H1 (cell line): ENCODE measurements at regions of chr11 and their contacts with region 1.

Region 1: GRCh38 chr11:17544181-17544622 is at the start of gene USH1C:
- DNase-seq: peak in 1 of 2 experiments; percentile 95
- H3K4me3 ChIP-seq: peak within 1 kb of the TSS; percentile 50 to 77 (median 62)
- H3K27ac ChIP-seq: no peak within 1 kb of the TSS
- H3K4me1 ChIP-seq: peaks cover 6 to 20% (median 9%) of the 10 kb centered on the region in 4 experiments
- H3K27me3 ChIP-seq: peaks cover 0 to 24% (median 8%) of the 10 kb centered on the region in 4 experiments; a peak in 4 of 7 replicates
- CTCF ChIP-seq: no peak
- EP300 ChIP-seq: no peak
- POLR2A ChIP-seq: no peak; a peak in 1 of 3 replicates
- RAD21 ChIP-seq: no peak
- total RNA-seq, gene USH1C: 1.3 and 2.4 TPM in 2 replicates

Region 2: GRCh38 chr11:17389211-17389956 is 154.8 kb before region 1 on chr11:
- CTCF ChIA-PET with region 1: interaction called, 22 read pairs
- POLR2A ChIA-PET with region 1: no interaction called
- DNase-seq: peak; percentile 53 to 92
- H3K4me3 ChIP-seq: peak overlapping the region; percentile 51 to 80 (median 60)
- H3K27ac ChIP-seq: no peak overlapping the region
- H3K4me1 ChIP-seq: peaks cover 0 to 9% (median 2%) of the 10 kb centered on the region in 4 experiments; a peak in 3 of 7 replicates
- H3K27me3 ChIP-seq: peaks cover 0 to 7% (median 0%) of the 10 kb centered on the region in 4 experiments; a peak in 4 of 7 replicates
- CTCF ChIP-seq: peak; percentile 41 to 82 (median 78)
- EP300 ChIP-seq: peak in 1 of 2 experiments; percentile 6; a peak in 1 of 3 replicates
- POLR2A ChIP-seq: no peak
- RAD21 ChIP-seq: peak; percentile 26 to 43; a peak in 3 of 4 replicates

Region 3: DNA sequence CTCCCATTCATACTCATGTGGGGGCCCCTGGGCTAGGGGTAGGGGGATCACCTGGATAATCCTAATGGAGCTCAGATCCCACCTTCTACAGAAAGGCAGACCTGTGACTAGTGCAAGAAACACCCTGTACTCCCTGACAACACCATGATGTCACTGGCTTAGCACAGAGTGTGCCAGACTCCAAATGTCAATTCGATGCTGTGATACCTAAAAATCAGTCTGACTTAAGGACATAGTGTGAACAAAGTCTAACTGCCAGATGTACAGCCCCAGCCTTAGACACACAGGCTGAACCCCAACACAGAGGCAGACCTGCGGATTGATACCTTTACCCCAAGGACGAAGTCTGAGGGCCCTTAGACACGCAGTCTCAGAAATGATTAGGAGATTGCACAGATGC is 76.1 kb before region 1 on chr11:
- CTCF ChIA-PET with region 1: no interaction called
- POLR2A ChIA-PET with region 1: no interaction called
- DNase-seq: no peak
- H3K4me3 ChIP-seq: no peak overlapping the region
- H3K27ac ChIP-seq: no peak overlapping the region
- H3K4me1 ChIP-seq: peaks cover 0 to under 1% (median 0%) of the 10 kb centered on the region in 4 experiments; a peak in 3 of 7 replicates
- H3K27me3 ChIP-seq: no peaks in the 10 kb centered on the region; a peak in 2 of 7 replicates
- CTCF ChIP-seq: no peak
- EP300 ChIP-seq: no peak
- POLR2A ChIP-seq: no peak
- RAD21 ChIP-seq: no peak

Region 4: DNA sequence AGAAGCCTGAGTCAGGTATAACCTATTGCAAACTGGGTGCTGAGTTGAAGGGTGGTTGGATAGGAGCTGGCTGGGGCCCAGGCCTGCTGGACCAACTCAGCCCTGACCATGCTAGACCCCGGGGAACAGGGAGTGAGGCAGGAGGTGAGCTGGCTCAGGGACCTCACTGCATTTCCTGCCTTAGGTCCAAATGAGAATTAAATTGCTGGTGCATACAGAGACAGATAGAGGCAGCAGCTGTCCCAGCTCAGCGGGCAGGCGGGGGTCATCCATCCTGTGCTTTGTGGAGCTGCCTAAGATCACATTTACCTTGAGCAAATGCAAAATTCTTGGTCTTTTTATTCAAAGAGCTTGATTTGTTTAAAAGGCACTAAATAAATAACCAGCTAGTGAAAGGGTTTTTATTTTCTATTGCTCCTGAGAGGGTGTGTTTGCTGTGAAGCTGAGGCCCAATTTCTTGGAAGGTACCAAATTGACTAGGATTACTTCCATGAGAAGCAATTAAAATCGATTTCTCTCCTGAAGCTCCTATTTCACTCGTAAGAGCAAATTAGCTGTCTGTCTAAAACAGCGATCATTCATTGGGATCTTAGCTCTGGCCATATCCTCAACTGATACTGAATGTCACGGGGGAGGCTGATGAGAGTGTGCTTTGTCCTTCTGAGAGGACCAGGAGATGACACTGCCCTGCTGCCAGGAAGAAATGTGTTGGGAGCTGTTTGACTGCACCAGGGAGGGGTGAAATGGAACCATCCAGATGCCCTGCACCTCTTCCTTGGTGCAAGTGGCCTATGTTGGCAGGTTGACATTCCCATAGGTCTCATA is 24.9 kb before region 1 on chr11:
- CTCF ChIA-PET with region 1: interaction called, 11 read pairs
- POLR2A ChIA-PET with region 1: no interaction called
- DNase-seq: no peak
- H3K4me3 ChIP-seq: no peak overlapping the region
- H3K27ac ChIP-seq: no peak overlapping the region
- H3K4me1 ChIP-seq: peaks cover 0 to 6% (median 3%) of the 10 kb centered on the region in 4 experiments; a peak in 6 of 7 replicates
- H3K27me3 ChIP-seq: no peaks in the 10 kb centered on the region
- CTCF ChIP-seq: no peak
- EP300 ChIP-seq: no peak
- POLR2A ChIP-seq: no peak
- RAD21 ChIP-seq: no peak

Region 5: GRCh38 chr11:17563248-17563647 is 19.0 kb after region 1 on chr11:
- CTCF ChIA-PET with region 1: interaction called, 98 read pairs
- POLR2A ChIA-PET with region 1: no interaction called
- DNase-seq: no peak
- H3K4me3 ChIP-seq: no peak overlapping the region
- H3K27ac ChIP-seq: no peak overlapping the region
- H3K4me1 ChIP-seq: no peaks in the 10 kb centered on the region
- H3K27me3 ChIP-seq: no peaks in the 10 kb centered on the region
- CTCF ChIP-seq: peak; percentile 12 to 56 (median 30)
- EP300 ChIP-seq: no peak
- POLR2A ChIP-seq: no peak
- RAD21 ChIP-seq: peak in 1 of 2 experiments; percentile 25; a peak in 1 of 4 replicates